ENCODE measurements at regions of chr11 and their contacts with region 1.

Region 1: GRCh38 chr11:111938687-111939160 is 1.6 kb downstream of the DIXDC1 start:
- DNase-seq: no peak
- ATAC-seq: peak; percentile 12
- H3K4me3 ChIP-seq: no peak overlapping the region
- H3K4me1 ChIP-seq: peaks cover 9% of the 10 kb centered on the region
- CTCF ChIP-seq: no peak

Region 2: GRCh38 chr11:111982019-111982464 is 43.3 kb after region 1 on chr11:
- intact Hi-C with region 1: loop called (anchors 5 to 10 kb)
- DNase-seq: peak in 2 of 3 donors; percentile 74 to 94
- ATAC-seq: peak; percentile 88
- H3K4me3 ChIP-seq: no peak overlapping the region
- H3K4me1 ChIP-seq: peaks cover 7% of the 10 kb centered on the region
- CTCF ChIP-seq: peak; percentile 60

Region 3: DNA sequence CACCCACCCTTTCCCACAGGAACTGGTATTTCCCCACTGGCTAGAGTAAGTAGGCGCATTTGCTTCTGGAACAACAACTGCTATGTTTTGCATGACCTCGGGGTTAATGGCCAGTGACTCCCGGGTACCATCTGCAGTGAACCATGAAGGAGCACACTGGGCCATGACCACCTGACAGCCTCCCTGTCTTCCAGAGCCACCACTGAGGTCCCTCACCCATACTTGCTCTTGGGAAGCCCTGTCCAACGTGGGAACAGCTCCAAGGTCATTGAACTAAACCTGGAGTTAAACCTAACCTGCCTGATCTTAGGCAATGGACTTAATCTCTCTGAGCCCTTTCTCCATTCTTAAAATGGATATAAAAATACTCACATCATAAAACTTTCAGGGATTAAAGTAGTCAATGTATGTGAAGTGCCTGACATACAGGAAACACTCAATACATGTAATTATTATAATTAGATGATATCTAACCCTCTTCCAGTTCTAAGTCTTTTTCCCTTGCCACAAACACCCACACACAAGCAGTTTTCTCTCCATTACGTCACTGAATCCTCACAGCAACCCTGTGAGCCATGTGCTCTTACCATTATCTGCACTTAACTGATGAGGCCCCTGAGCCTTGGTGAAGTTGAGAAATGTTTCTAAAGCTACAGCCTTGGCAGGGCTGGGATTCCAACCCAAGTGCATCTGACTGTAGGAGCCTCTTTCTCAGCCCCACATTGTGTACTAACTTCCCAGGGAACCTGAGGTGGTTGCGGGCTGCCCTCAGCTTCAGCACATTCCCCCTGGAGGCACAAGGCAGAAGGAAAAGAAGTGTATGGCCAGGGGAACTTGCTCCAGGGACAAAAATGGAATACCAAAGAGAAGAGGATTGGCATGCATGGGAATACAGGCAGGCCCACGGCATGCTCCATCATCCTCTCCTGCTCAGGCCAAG is 948.0 kb after region 1 on chr11:
- intact Hi-C with region 1: no loop called
- DNase-seq: no peak
- ATAC-seq: no peak
- H3K4me3 ChIP-seq: no peak overlapping the region
- H3K4me1 ChIP-seq: no peaks in the 10 kb centered on the region
- CTCF ChIP-seq: no peak